ENCODE measurements at regions of chr9 and their contacts with region 1.

Region 1: GRCh38 chr9:114919611-114920010 is 10.8 kb downstream of the TNFSF8 start:
- DNase-seq: peak; percentile 55
- ATAC-seq: peak; percentile 86
- H3K4me3 Mint-ChIP-seq: peak overlapping the region; percentile 3
- H3K27ac Mint-ChIP-seq: peak overlapping the region; percentile 69
- H3K4me1 Mint-ChIP-seq: peaks cover 90% of the 10 kb centered on the region
- H3K27me3 Mint-ChIP-seq: no peaks in the 10 kb centered on the region

Region 2: GRCh38 chr9:114906908-114907571 is 12.6 kb before region 1 on chr9:
- CTCF ChIA-PET with region 1: interaction called, 32 read pairs
- POLR2A ChIA-PET with region 1: interaction called, 5 read pairs
- intact Hi-C with region 1: no loop called
- DNase-seq: peak; percentile 49
- ATAC-seq: peak; percentile 23
- H3K4me3 Mint-ChIP-seq: no peak overlapping the region
- H3K27ac Mint-ChIP-seq: peak overlapping the region; percentile 86
- H3K4me1 Mint-ChIP-seq: peaks cover 58% of the 10 kb centered on the region
- H3K27me3 Mint-ChIP-seq: no peaks in the 10 kb centered on the region

Region 3: DNA sequence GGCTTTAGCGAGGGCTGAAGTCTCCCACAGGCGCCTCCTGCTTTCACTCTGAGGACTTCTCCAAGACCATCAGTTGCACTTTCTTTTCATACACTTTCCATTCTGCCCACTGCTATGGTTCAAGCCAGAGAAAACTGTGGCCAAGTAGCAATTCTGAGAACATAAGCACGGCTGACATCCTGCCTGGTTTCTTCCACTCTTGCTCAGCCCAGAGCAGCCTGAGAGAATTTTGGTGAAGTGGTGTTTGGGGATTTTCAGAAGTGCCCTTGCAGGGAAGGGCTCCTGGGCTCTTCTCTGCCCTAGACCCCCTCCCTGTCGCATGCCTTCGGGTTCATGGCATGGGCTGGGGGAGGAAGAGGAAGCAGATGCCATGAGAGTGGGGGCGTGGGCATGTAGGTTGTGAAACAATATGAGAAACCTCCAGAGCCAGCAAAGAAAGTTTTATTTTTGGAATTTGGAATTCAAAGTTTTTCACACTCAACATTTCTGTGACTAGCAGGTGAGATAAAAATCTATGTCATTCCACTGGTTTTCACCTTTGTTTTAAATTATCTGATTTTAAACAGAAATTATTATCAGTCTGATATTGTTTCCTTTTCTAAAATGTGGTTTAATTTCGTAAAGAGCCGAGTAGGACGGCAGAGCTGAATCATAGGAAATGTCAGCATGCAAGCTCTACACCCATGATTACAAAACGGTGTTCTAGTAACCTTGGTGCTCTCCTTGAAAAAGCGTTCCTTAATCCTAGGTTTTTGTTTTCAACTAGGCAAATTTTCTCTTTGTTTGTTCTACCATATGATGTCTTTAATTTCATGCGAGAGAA is 38.6 kb after region 1 on chr9:
- CTCF ChIA-PET with region 1: no interaction called
- POLR2A ChIA-PET with region 1: no interaction called
- intact Hi-C with region 1: loop called in 1 of 2 experiments (anchors 5 kb)
- DNase-seq: peak; percentile 68
- ATAC-seq: peak; percentile 83
- H3K4me3 Mint-ChIP-seq: peak overlapping the region; percentile 68
- H3K27ac Mint-ChIP-seq: peak overlapping the region; percentile 96
- H3K4me1 Mint-ChIP-seq: peaks cover 56% of the 10 kb centered on the region
- H3K27me3 Mint-ChIP-seq: no peaks in the 10 kb centered on the region